Thyroid gland (tissue), 4 donors: ENCODE measurements at regions of chr6 and their contacts with region 1.

Region 1: DNA sequence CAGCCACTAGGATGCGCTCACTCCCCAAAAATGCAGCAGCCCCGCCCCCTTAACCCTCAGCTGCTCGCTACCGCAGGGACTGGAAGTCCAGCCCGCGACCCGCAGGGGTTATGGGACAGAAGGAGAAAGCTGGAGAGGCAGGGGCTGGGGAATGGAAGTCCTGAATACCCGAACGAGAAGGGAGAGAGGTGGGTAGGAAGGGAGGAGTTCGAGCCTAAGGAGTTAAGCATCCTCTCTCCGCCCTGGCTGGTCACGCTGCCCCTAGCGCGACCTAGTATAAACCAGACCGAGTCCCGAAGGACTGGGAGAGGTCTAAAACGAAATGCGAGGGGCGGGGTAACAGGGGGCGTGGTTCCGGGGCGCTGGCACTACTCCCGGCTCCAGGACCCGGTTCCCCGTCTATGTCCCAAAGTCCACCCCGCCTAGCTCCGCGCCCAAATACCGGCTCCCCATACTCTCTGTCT is 448 bp upstream of the DDAH2 start:
- DNase-seq: peak; percentile 93 to 95
- H3K4me3 ChIP-seq: peak overlapping the region; percentile 55 to 84 (median 62)
- H3K27ac ChIP-seq: peak overlapping the region; percentile 82 to 98 (median 93)
- H3K4me1 ChIP-seq: peaks cover 30 to 51% of the 10 kb centered on the region in 2 donors
- H3K27me3 ChIP-seq: no peaks in the 10 kb centered on the region
- CTCF ChIP-seq: peak; percentile 29 to 72 (median 60)
- POLR2A ChIP-seq: no peak

Region 2: GRCh38 chr6:31689249-31690110 is 40.1 kb before region 1 on chr6:
- intact Hi-C with region 1: loop called (anchors 5 kb)
- DNase-seq: no peak
- H3K4me3 ChIP-seq: no peak overlapping the region
- H3K27ac ChIP-seq: no peak overlapping the region
- H3K4me1 ChIP-seq: no peaks in the 10 kb centered on the region
- H3K27me3 ChIP-seq: no peaks in the 10 kb centered on the region
- CTCF ChIP-seq: peak in 1 of 6 experiments; percentile 17
- POLR2A ChIP-seq: no peak

Region 3: GRCh38 chr6:31834434-31835198 is 105.1 kb after region 1 on chr6:
- intact Hi-C with region 1: loop called (anchors 10 kb)
- DNase-seq: peak; percentile 87 to 90
- H3K4me3 ChIP-seq: peak overlapping the region; percentile 55 to 85 (median 77)
- H3K27ac ChIP-seq: peak overlapping the region; percentile 90 to 100 (median 92)
- H3K4me1 ChIP-seq: peaks cover 40 to 42% of the 10 kb centered on the region in 2 donors
- H3K27me3 ChIP-seq: no peaks in the 10 kb centered on the region
- CTCF ChIP-seq: peak in 1 of 6 experiments; percentile 13
- POLR2A ChIP-seq: peak; percentile 28 to 86

Region 4: DNA sequence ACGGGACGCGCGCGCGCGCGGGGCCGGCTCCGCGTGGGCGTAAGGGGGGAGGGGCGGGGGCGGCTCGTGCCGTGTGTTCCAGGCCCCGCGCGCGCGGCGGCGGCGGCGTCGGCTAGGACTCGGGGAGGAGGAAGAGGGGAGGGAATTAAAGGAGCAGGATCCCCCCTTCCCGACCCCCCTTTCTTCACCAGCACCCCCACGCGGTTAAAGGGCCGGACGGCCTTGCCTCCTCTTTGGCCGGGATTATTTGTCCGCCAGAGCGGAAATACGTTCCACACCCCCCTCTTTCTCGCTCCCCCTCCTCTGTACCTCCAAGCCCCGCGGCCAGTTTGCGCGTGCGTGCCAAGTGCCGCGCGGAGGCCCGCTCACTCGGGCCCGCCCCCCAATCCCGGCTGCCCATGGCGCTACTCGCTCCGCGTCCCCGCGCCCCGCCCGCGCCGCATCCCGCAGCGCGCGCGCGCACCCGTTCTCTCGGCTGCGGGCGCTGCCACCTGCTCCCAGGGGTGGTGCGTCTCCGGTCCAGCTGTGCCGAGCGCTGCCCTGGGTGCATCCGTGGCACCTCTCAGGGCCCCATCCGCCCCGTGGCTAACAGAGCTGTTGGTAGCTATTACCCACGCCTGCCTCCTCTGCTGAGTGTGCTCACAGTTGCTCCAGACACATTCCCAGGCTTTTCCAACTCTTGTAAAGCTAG is 172.6 kb after region 1 on chr6 and contains the start of gene ZBTB12:
- intact Hi-C with region 1: no loop called
- DNase-seq: peak; percentile 93 to 94
- H3K4me3 ChIP-seq: peak within 1 kb of the TSS; percentile 8 to 47 (median 23)
- H3K27ac ChIP-seq: peak within 1 kb of the TSS; percentile 45 to 66 (median 66)
- H3K4me1 ChIP-seq: peaks cover 15 to 22% of the 10 kb centered on the region in 2 donors
- H3K27me3 ChIP-seq: no peaks in the 10 kb centered on the region
- CTCF ChIP-seq: peak in 1 of 6 experiments; percentile 14
- POLR2A ChIP-seq: peak in 1 of 2 donors; percentile 54
- total RNA-seq, gene ZBTB12: 0.94 to 2.9 (median 1.5) TPM